ENCODE measurements at regions of chr13 and their contacts with region 1.

Region 1: GRCh38 chr13:36447501-36447900 is 15.2 kb downstream of the CCNA1 start:
- DNase-seq: peak in 1 of 4 donors; percentile 40
- ATAC-seq: no peak
- H3K4me3 ChIP-seq: no peak overlapping the region
- H3K27ac ChIP-seq: no peak overlapping the region
- H3K4me1 ChIP-seq: no peaks in the 10 kb centered on the region
- H3K27me3 ChIP-seq: no peaks in the 10 kb centered on the region
- CTCF ChIP-seq: no peak

Region 2: DNA sequence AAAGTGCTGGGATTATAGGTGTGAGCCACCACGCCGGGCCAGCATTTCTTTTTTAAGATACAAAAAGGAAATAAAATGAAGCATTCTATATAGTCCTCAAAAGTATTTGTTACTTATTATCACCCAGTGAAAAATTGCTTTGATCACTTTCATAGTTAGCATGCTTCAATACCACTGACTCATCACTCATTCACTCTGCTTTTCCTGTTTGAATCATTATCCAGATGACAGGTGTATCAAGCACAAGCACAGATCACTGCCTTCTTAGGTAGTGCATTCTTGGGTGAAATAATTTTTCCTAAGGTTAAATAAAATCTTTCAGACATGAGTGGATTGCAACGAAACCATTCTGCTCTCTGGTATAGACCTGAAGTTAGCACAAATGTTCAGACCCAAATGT is 65.5 kb before region 1 on chr13:
- intact Hi-C with region 1: no loop called
- DNase-seq: no peak
- ATAC-seq: no peak
- H3K4me3 ChIP-seq: no peak overlapping the region
- H3K27ac ChIP-seq: no peak overlapping the region
- H3K4me1 ChIP-seq: no peaks in the 10 kb centered on the region
- H3K27me3 ChIP-seq: no peaks in the 10 kb centered on the region
- CTCF ChIP-seq: no peak

Region 3: DNA sequence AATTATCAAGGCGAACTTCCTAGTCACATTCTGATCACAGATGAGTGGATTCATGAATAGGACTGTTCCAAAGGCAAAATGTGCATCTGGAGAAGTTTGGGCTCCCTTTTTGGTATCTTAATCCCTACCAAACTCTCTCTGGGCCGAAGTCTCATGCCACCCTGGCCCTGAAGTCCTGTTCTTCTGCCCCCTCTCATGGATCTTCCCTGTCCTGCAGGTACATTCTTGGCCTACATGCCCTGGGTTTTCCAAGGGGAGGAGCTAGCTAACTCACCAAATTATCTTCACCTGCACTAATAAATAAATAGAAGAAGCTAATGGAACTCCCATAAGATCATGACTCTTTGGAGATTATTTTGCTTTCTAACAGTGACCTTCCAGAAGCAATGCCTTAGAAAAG is 276.6 kb after region 1 on chr13:
- intact Hi-C with region 1: loop called in 1 of 2 experiments (anchors 10 kb)
- DNase-seq: no peak
- ATAC-seq: no peak
- H3K4me3 ChIP-seq: no peak overlapping the region
- H3K27ac ChIP-seq: no peak overlapping the region
- H3K4me1 ChIP-seq: no peaks in the 10 kb centered on the region
- H3K27me3 ChIP-seq: no peaks in the 10 kb centered on the region
- CTCF ChIP-seq: no peak